HEK293 (cell line): ENCODE measurements at regions of chr10 and their contacts with region 1.

Region 1: GRCh38 chr10:17394854-17395253 is 59.5 kb downstream of the ST8SIA6 start:
- H3K4me3 ChIP-seq: no peak overlapping the region
- H3K27ac ChIP-seq: no peak overlapping the region
- H3K4me1 ChIP-seq: no peaks in the 10 kb centered on the region
- CTCF ChIP-seq: no peak

Region 2: DNA sequence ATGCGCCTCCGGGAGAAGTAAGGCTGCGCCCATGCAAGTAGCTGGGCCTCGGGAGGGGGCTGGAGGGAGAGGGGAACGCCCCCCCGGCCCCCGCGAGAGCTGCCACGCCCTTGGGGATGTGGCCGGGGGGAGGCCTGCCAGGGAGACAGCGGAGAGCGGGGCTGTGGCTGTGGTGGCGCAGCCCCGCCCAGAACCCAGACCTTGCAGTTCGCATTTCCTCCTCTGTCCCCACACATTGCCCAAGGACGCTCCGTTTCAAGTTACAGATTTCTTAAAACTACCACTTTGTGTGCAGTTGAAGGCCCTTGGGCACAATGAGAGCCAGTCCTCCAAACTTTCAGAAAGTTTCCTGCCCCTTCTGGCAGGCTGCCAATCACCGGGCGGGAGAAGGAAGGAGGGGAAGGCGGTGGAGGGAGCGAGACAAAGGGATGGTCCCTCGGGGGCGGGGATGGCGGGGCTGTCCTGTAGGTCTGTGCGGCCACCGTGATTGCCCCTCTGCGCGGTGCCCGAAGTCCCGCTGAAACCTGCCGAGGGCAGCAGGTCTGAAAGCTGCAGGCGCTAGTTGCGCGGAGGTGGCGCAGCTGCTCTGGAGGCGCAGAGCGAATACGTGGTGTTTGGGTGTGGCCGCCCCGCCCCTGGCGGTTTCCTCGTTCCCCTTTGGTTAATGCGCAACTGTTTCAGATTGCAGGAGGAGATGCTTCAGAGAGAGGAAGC is 164.7 kb before region 1 on chr10:
- CTCF ChIA-PET with region 1: no interaction called
- POLR2A ChIA-PET with region 1: no interaction called
- H3K4me3 ChIP-seq: peak overlapping the region; percentile 99
- H3K27ac ChIP-seq: peak overlapping the region; percentile 97
- H3K4me1 ChIP-seq: peaks cover 11% of the 10 kb centered on the region
- CTCF ChIP-seq: peak; percentile 44

Region 3: DNA sequence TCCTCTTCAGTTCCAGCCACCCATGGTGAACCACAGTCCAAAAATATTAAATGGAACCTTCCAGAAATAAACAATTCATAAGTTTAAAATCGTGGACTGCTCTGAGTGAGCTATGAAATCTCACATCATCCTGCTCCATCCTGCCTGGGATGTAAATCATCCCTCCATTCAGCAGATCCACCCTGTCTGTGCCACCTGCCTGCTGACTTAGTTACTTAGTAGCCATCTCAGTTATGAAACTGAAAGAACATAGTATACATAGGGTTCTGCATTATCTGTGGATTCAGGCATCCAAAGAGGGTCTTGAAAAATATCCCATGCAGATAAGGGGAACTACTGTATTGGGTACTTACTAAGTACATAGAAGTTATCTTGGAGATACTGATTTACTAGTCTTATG is 29.5 kb before region 1 on chr10:
- CTCF ChIA-PET with region 1: no interaction called
- POLR2A ChIA-PET with region 1: no interaction called
- H3K4me3 ChIP-seq: no peak overlapping the region
- H3K27ac ChIP-seq: no peak overlapping the region
- H3K4me1 ChIP-seq: no peaks in the 10 kb centered on the region
- CTCF ChIP-seq: no peak

Region 4: GRCh38 chr10:17409170-17409733 is 14.4 kb after region 1 on chr10:
- CTCF ChIA-PET with region 1: interaction called, 10 read pairs
- POLR2A ChIA-PET with region 1: no interaction called
- H3K4me3 ChIP-seq: no peak overlapping the region
- H3K27ac ChIP-seq: no peak overlapping the region
- H3K4me1 ChIP-seq: no peaks in the 10 kb centered on the region
- CTCF ChIP-seq: no peak

Region 5: GRCh38 chr10:17533731-17534130 is 138.9 kb after region 1 on chr10:
- CTCF ChIA-PET with region 1: no interaction called
- POLR2A ChIA-PET with region 1: no interaction called
- H3K4me3 ChIP-seq: no peak overlapping the region
- H3K27ac ChIP-seq: no peak overlapping the region
- H3K4me1 ChIP-seq: no peaks in the 10 kb centered on the region
- CTCF ChIP-seq: no peak

Region 6: DNA sequence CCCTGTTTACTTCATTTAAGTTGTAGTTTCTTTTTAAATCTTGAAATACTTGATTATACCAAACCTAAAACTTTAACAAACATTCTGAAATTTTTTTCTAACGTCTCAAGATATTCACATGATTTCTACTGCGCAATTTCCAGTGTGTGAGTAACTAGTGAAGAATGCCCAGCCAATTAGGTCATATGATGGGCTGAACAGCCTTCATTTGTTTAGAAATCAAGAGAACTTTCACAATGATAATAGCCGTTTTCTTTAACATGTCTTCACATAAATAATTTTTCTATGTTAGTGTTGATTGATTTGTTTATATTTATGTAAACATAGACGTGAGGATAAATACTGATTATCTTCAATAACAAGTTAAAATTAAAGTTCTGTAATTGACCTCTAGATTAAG is 270.9 kb after region 1 on chr10:
- CTCF ChIA-PET with region 1: no interaction called
- POLR2A ChIA-PET with region 1: no interaction called
- H3K4me3 ChIP-seq: no peak overlapping the region
- H3K27ac ChIP-seq: no peak overlapping the region
- H3K4me1 ChIP-seq: no peaks in the 10 kb centered on the region
- CTCF ChIP-seq: no peak